ENCODE measurements at regions of chr10 and their contacts with region 1.

Region 1: DNA sequence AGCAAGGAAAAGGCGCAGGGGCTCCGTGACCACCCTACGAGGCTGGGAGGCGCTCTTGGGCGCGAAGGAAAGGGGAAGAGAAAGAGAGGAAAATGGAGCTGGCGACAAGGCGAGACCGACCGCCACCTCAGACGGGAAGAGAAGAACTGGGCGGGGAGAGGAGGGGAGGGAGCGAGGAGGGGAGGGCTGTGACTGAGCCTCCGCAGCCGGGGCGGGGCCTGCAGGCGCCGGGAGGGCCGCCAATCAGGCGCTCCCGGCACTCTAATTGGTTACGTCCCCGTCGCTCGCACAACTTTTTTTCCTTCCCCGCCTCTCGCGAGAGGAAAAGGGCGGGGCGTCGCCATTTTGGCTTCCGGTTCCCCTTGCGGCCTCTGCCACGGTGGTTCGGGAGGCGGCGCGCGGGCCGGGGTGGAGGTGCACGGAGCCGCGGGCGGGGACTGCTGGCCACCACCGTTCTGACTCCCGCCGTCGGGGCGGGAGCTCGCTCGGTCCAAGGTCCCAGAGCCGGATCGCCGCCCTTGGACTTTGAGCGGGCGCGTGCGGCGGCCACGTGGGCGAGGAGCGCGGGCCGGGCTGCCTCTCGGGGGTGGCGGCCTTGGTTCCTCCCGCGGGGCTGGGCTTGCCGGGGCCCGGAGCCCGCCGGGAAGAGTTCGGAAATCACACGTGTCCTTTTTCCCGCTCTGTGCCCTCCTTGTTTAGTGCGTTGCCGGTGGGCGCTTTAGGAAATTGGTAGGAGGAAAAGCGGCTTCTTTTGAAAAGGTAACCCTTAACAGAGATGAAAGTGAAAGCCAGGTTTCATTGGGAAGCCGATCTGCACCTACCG is at the start of gene GDI2:
- DNase-seq: peak; percentile 99
- H3K4me3 Mint-ChIP-seq: peak within 1 kb of the TSS; percentile 93
- H3K27ac Mint-ChIP-seq: peak within 1 kb of the TSS; percentile 95
- H3K4me1 Mint-ChIP-seq: peaks cover 56% of the 10 kb centered on the region
- H3K27me3 Mint-ChIP-seq: no peaks in the 10 kb centered on the region
- total RNA-seq, gene GDI2: 305 and 307 TPM in 2 replicates

Region 2: DNA sequence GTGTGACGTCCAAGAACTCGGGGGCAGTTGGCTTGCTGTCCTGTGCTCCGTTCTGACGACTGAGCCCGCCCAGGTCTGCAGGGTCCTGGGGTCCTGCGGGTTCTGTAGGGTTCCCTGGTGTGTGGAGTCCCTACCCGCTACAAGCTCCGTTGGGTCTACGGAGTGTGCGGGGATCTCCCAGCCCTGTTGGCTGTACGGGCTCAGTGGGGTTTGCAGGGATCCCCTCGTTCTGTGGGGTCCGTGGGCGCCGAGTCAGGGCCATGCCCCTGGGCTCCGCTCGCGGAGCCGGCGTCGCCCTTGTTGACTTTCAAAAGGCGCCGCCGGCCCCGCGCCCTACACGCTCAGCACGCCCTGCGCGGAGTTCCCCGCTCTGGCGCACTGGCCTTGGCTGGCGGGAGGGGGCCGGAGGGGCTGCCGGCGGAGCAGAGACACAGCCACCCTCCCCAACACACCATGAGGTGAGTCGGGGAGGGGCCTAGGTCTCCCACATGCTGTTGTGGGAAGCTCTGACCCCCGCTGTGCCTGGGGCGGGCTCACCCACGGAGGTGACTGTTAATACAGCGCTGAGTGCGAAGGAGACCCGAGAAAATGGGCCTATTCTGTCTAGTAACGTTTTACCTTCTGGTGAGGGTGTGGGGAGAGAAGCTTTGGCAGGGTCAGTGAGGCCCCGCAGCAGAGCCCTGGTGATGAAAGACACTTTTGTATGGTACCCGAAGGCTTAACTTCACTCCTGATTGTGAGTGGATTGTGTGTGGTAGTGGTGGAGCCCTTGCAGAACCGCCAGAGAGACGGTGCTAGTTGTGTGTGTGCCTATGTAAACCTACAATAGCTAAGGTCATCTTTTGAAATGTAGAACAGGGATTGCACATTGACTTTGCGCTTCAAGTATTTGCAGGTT is 120.8 kb before region 1 on chr10:
- intact Hi-C with region 1: no loop called
- DNase-seq: peak; percentile 91
- H3K4me3 Mint-ChIP-seq: peak overlapping the region; percentile 83
- H3K27ac Mint-ChIP-seq: peak overlapping the region; percentile 81
- H3K4me1 Mint-ChIP-seq: peaks cover 42% of the 10 kb centered on the region
- H3K27me3 Mint-ChIP-seq: no peaks in the 10 kb centered on the region

Region 3: DNA sequence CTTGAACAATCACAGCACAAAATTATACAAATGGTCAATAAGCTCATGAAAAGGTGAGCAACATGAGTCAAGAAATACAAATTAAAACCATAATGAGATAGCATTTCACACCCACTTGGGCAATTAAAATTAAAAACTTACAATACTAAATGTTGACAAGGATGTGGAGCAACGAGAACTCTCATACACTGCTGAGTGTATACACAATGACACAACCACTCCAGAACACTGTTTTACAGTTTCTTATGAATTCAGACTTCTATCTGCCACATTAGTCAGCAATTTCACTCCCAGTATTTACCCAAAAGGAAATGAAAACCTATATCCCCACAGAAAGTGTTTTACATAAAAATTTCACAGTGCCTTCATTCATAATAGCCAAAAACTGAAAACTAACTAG is 31.3 kb before region 1 on chr10:
- intact Hi-C with region 1: loop called (anchors 2 kb)
- DNase-seq: no peak
- H3K4me3 Mint-ChIP-seq: no peak overlapping the region
- H3K27ac Mint-ChIP-seq: peak overlapping the region; percentile 58
- H3K4me1 Mint-ChIP-seq: peaks cover 38% of the 10 kb centered on the region
- H3K27me3 Mint-ChIP-seq: no peaks in the 10 kb centered on the region

Region 4: GRCh38 chr10:5800790-5801189 is 12.7 kb before region 1 on chr10:
- intact Hi-C with region 1: no loop called
- DNase-seq: no peak
- H3K4me3 Mint-ChIP-seq: no peak overlapping the region
- H3K27ac Mint-ChIP-seq: peak overlapping the region; percentile 53
- H3K4me1 Mint-ChIP-seq: peaks cover 17% of the 10 kb centered on the region
- H3K27me3 Mint-ChIP-seq: no peaks in the 10 kb centered on the region

Region 5: GRCh38 chr10:5844345-5845048 is 31.0 kb after region 1 on chr10:
- intact Hi-C with region 1: loop called (anchors 1 kb)
- DNase-seq: no peak
- H3K4me3 Mint-ChIP-seq: peak overlapping the region; percentile 4
- H3K27ac Mint-ChIP-seq: peak overlapping the region; percentile 67
- H3K4me1 Mint-ChIP-seq: peaks cover 20% of the 10 kb centered on the region
- H3K27me3 Mint-ChIP-seq: no peaks in the 10 kb centered on the region

Region 6: DNA sequence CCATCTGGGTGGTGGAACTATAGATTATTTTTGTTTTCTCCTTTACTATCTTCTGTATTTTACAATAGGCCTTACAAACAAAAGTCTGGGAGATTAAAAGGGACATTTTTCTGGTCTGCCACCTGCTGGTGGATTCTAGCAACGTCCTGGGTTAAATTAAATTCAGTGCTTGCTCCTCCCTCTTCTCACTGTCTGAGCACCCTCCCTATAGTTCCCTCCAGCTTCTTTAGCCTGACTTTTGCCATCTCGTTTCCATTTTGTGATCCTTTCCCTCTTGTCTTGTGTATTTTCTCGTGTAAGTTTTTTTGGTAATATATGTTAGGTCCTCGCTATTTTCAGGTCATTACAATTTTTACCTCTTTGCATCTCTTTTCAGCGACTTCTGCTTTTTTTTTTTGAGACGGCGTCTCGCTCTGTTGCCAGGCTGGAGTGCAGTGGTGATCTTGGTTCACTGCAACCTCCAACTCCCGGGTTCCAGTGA is 60.1 kb after region 1 on chr10:
- intact Hi-C with region 1: loop called (anchors 1 kb)
- DNase-seq: peak; percentile 91
- H3K4me3 Mint-ChIP-seq: peak overlapping the region; percentile 39
- H3K27ac Mint-ChIP-seq: no peak overlapping the region
- H3K4me1 Mint-ChIP-seq: peaks cover 5% of the 10 kb centered on the region
- H3K27me3 Mint-ChIP-seq: no peaks in the 10 kb centered on the region

Region 7: DNA sequence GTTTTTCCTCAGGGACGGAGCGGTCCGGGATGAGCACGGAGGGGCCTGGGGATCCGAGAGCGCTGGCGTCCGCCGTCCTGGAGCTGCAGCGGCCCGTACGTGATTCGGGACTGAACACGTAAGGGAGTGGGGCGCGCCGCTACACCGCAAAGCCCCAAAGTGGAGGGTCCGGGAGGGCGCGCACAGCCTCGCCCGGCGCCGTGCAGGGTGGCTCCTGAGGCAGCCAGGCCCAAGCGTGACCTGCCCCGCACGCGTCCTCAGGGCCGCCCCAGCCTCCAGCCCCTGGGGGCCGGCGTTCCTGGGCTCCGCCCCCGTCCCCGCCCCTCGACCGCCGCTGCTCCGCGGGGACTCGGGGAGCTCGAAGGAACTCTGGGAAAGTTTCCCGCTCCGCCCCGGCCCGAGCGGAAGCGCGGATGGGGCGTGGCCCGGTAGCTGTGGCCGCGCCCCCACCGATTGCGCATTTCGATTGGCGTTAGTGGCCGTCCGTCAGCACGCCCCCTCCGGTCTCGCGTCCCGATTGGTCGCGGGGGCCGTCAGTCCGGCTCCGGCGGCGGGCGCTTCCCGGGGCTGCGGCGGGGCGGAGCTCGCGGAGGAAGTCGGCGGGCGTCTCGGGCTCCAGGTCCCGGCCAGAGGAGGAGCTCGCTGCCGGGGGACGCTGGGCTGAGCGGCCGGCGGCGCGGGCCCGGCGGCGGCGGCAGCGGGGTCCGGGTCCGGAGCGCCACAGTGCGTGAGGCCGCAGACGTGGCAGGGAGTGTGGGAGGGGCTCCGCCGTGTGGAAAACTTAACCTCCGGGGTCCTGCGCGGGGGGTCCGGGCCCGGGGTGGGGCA is 76.3 kb after region 1 on chr10 and contains the starts of genes ANKRD16 and FBH1:
- intact Hi-C with region 1: loop called (anchors 1 kb)
- DNase-seq: peak; percentile 100
- H3K4me3 Mint-ChIP-seq: peak within 1 kb of the TSS; percentile 94
- H3K27ac Mint-ChIP-seq: peak within 1 kb of the TSS; percentile 85
- H3K4me1 Mint-ChIP-seq: peaks cover 40% of the 10 kb centered on the region
- H3K27me3 Mint-ChIP-seq: no peaks in the 10 kb centered on the region
- total RNA-seq, gene ANKRD16: 10.8 and 12.2 TPM in 2 replicates
- total RNA-seq, gene FBH1: 58.4 and 62.9 TPM in 2 replicates

Region 8: DNA sequence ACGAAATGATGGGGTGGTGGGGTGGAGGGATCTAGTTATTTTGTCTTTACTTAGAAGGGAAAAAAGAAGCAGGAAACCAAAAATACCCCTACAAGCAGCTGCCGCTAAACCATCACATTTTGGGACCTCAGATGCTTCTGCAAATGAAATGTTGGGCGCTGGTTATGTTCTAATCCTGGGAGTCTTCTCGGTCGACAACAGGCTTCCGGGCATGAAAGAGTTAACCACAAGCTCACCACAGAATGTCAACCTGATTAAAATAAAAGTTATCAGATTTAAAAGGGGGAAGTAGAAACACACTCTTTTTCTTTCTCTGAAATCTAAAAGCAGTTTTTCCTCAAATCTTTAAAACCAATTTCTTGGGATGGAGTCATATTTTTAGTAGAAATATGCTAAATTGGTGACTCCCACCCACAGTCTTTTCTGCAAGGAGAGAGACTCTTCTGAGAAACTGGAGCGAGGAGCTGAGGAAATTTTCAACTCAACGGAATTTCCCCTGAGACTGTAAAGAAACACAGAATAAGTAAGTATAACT is 231.9 kb after region 1 on chr10:
- intact Hi-C with region 1: loop called (anchors 5 kb)
- DNase-seq: peak; percentile 82
- H3K4me3 Mint-ChIP-seq: peak overlapping the region; percentile 80
- H3K27ac Mint-ChIP-seq: peak overlapping the region; percentile 95
- H3K4me1 Mint-ChIP-seq: peaks cover 76% of the 10 kb centered on the region
- H3K27me3 Mint-ChIP-seq: no peaks in the 10 kb centered on the region

Measured in activated CD4-positive, alpha-beta T cell treated with anti-CD3 and anti-CD28 coated beads, Interleukin-2, amount 10 ng/mL, durations not matched to agents 24 days and 14 days (primary cell).